OCI-LY7 (cell line): ENCODE measurements at regions of chr19 and their contacts with region 1.

Region 1: GRCh38 chr19:47124937-47125668 is 5.5 kb upstream of the SAE1 start:
- DNase-seq: peak; percentile 74
- H3K4me3 ChIP-seq: no peak overlapping the region
- H3K27ac ChIP-seq: no peak overlapping the region
- H3K4me1 ChIP-seq: peaks cover 3% of the 10 kb centered on the region
- CTCF ChIP-seq: peak; percentile 92

Region 2: DNA sequence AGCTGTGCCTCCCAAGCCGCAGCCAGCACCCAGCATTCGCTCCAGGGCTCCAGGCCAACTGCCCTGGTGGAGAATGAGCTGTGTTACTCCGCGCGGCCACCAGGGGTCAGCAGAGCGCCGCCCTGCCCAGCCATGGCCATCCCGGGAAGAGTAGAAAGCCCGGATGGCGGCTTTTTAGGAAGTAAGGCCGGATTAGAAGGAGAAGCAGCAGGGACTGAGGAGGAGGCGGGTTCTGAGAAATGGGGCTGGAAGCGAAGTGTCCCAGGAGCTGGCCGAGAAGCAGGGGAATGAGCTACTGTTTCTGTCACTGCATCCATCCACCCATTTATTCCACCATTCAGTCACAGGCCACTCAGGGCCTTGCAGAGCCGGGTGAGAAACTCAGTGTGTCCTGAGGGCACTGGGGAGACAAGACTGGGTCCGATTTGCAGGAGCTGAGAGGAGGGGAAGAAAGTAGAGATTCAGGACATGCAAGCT is 112.0 kb before region 1 on chr19:
- CTCF ChIA-PET with region 1: no interaction called
- POLR2A ChIA-PET with region 1: no interaction called
- intact Hi-C with region 1: loop called (anchors 2 kb)
- DNase-seq: peak; percentile 43
- H3K4me3 ChIP-seq: no peak overlapping the region
- H3K27ac ChIP-seq: no peak overlapping the region
- H3K4me1 ChIP-seq: peaks cover 3% of the 10 kb centered on the region
- CTCF ChIP-seq: peak; percentile 98

Region 3: GRCh38 chr19:47032171-47032811 is 92.8 kb before region 1 on chr19:
- CTCF ChIA-PET with region 1: no interaction called
- POLR2A ChIA-PET with region 1: no interaction called
- intact Hi-C with region 1: no loop called
- DNase-seq: peak; percentile 69
- H3K4me3 ChIP-seq: no peak overlapping the region
- H3K27ac ChIP-seq: no peak overlapping the region
- H3K4me1 ChIP-seq: peaks cover 20% of the 10 kb centered on the region
- CTCF ChIP-seq: peak; percentile 91

Region 4: DNA sequence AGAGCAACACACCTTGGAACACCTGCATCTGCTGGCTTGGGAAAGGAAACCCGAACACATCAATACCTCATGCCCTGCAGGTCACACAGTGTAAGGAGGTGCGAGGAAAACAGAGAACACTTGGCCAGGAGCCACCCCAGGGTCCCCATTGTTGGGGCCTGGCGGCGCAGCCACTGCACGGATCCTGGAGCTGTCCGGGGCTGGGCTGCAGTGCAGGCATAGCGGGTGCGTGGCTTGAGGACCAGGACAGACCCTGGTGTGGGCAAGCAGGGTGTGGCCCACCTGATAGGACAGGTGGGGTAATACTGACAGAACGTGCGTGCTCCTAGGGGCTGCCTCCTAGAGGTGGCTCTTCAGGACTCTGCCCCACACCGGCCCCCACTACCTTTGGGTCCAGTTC is 59.9 kb before region 1 on chr19:
- CTCF ChIA-PET with region 1: no interaction called
- POLR2A ChIA-PET with region 1: no interaction called
- intact Hi-C with region 1: no loop called
- DNase-seq: no peak
- H3K4me3 ChIP-seq: no peak overlapping the region
- H3K27ac ChIP-seq: no peak overlapping the region
- H3K4me1 ChIP-seq: no peaks in the 10 kb centered on the region
- CTCF ChIP-seq: no peak

Region 5: GRCh38 chr19:47075179-47075810 is 49.8 kb before region 1 on chr19:
- CTCF ChIA-PET with region 1: no interaction called
- POLR2A ChIA-PET with region 1: no interaction called
- intact Hi-C with region 1: loop called (anchors 1 kb)
- DNase-seq: no peak
- H3K4me3 ChIP-seq: no peak overlapping the region
- H3K27ac ChIP-seq: no peak overlapping the region
- H3K4me1 ChIP-seq: no peaks in the 10 kb centered on the region
- CTCF ChIP-seq: no peak

Region 6: DNA sequence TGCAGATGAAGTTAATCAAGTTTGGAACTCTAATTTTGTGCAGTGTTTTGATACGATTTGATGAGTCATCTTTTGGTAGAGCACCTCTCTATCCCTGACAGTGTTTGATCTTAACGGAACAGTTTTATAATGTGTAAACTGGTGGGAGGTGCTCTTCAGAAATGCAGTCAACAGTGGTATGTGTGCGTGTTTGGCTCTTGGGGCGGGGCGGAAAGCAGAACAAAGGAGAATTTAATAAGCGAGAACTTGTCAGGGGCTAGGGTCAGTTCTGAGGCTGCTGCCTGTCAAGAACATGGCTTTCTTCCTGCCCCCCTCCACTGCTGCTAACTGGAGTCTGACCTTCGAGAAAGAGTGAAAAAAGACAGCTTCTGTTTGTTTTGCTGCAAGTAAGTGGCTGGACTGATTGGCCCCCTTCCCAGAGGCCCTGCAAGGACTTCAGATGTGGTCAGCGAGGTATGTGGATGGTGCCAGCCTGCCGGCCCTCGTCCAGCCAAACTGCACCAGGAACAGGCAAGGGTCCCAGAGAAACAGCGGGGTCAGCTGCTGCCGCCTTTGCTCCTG is 65.1 kb after region 1 on chr19:
- CTCF ChIA-PET with region 1: no interaction called
- POLR2A ChIA-PET with region 1: no interaction called
- intact Hi-C with region 1: no loop called
- DNase-seq: no peak
- H3K4me3 ChIP-seq: no peak overlapping the region
- H3K27ac ChIP-seq: no peak overlapping the region
- H3K4me1 ChIP-seq: peaks cover 16% of the 10 kb centered on the region
- CTCF ChIP-seq: no peak